Vagina (tissue), 2 donors: ENCODE measurements at regions of chr5 and their contacts with region 1.

Region 1: DNA sequence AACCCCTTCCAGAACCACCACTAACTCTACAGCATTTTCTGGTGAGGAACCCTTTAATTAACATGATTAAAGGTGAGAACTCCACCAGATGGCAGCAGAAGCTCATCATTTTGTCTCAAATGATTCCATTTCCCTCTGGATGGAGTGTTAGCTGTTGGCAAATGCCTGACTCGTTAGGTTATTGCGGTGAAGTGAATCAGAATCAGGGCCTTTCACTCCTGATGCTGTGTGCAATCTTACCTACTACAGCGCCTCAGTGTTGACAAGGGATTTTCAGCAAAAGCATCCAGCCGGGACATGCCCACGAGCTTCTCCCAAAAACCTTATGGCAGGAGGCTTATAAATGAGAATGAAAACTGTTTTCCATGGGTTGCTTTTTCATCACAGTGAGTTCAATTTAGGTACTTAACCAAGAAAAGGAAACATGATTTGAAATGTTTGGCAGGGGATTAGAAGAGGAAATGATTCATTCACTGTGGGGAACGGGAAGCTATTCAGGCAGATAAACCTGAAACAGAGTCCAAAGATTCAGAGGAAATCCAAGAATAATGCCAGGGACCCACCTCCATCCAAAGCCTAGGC is 48.0 kb upstream of the CAST start:
- DNase-seq: no peak
- H3K4me3 ChIP-seq: no peak overlapping the region
- H3K27ac ChIP-seq: peak overlapping the region; percentile 20
- H3K4me1 ChIP-seq: peaks cover 6% of the 10 kb centered on the region
- H3K27me3 ChIP-seq: no peaks in the 10 kb centered on the region
- CTCF ChIP-seq: peak; percentile 61 to 75 (median 73)
- POLR2A ChIP-seq: no peak

Region 2: GRCh38 chr5:96008987-96009647 is 605.1 kb before region 1 on chr5:
- intact Hi-C with region 1: no loop called
- DNase-seq: no peak
- H3K4me3 ChIP-seq: no peak overlapping the region
- H3K27ac ChIP-seq: no peak overlapping the region
- H3K4me1 ChIP-seq: no peaks in the 10 kb centered on the region
- H3K27me3 ChIP-seq: no peaks in the 10 kb centered on the region
- CTCF ChIP-seq: no peak
- POLR2A ChIP-seq: no peak

Region 3: DNA sequence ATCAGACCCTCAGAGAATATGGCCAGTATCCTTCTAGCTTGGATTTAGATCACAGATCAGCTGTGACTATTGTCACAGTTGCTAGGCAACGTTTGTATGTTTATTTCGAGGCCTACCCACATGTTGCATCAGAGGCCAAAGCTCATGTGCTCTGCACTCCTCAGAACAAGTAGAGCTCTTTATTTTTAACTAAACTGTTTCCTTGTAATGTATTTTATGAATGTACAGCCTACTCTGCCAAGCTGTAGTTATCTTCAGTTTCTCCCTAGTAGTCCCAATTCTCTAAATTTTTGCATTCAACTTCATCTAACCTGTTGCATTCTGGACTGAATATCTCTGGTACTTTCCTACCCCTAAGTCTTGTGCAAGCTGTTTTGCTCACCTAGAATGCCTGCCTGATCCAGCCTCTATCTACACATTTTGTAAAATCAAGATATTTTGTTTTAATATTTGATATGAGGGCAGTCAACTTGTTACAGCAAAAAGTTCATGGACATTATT is 100.8 kb after region 1 on chr5:
- intact Hi-C with region 1: loop called (anchors 10 kb)
- DNase-seq: no peak
- H3K4me3 ChIP-seq: no peak overlapping the region
- H3K27ac ChIP-seq: peak overlapping the region; percentile 69
- H3K4me1 ChIP-seq: peaks cover 85% of the 10 kb centered on the region
- H3K27me3 ChIP-seq: no peaks in the 10 kb centered on the region
- CTCF ChIP-seq: no peak
- POLR2A ChIP-seq: no peak

Region 4: DNA sequence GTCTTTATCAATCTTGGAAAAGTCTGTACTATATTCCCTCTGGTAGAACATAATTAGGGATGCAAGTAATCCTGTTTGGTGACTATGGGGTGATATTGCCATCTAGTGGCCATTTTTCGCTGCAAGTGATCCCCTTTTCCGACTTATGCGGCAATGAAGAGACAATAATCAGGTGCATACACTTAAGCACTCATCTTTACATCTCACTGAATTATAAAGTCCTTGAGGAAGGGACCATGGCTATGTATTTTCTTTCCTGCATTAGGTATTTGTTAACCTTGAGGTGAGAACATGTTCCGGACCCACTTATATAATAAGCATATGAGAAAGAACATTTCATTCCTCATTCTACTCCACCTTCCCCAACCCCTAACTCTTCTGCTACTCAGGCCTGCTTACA is 547.8 kb after region 1 on chr5:
- intact Hi-C with region 1: loop called (anchors 10 kb)
- DNase-seq: no peak
- H3K4me3 ChIP-seq: no peak overlapping the region
- H3K27ac ChIP-seq: no peak overlapping the region
- H3K4me1 ChIP-seq: no peaks in the 10 kb centered on the region
- H3K27me3 ChIP-seq: no peaks in the 10 kb centered on the region
- CTCF ChIP-seq: peak; percentile 51 to 78 (median 58)
- POLR2A ChIP-seq: no peak